Activated B cell treated with CpG ODN at 0.5 μM for 24 hours (primary cell): ENCODE measurements at regions of chr1 and their contacts with region 1.

Region 1: GRCh38 chr1:26472901-26473845 is 933 bp downstream of the HMGN2 start:
- DNase-seq: peak; percentile 95
- ATAC-seq: peak; percentile 78
- H3K4me3 Mint-ChIP-seq: peak overlapping the region; percentile 88
- H3K27ac Mint-ChIP-seq: peak overlapping the region; percentile 84
- H3K4me1 Mint-ChIP-seq: peaks cover 58% of the 10 kb centered on the region
- H3K27me3 Mint-ChIP-seq: no peaks in the 10 kb centered on the region
- CTCF ChIP-seq: no peak

Region 2: GRCh38 chr1:25933479-25934365 is 539.5 kb before region 1 on chr1:
- CTCF ChIA-PET with region 1: no interaction called
- POLR2A ChIA-PET with region 1: no interaction called
- intact Hi-C with region 1: no loop called
- DNase-seq: no peak
- ATAC-seq: no peak
- H3K4me3 Mint-ChIP-seq: no peak overlapping the region
- H3K27ac Mint-ChIP-seq: no peak overlapping the region
- H3K4me1 Mint-ChIP-seq: no peaks in the 10 kb centered on the region
- H3K27me3 Mint-ChIP-seq: peaks cover 15% of the 10 kb centered on the region
- CTCF ChIP-seq: no peak

Region 3: GRCh38 chr1:26111530-26112406 is 361.4 kb before region 1 on chr1 and contains the start of gene PDIK1L:
- CTCF ChIA-PET with region 1: no interaction called
- POLR2A ChIA-PET with region 1: no interaction called
- intact Hi-C with region 1: loop called (anchors 1 kb)
- DNase-seq: peak; percentile 90
- ATAC-seq: peak; percentile 80
- H3K4me3 Mint-ChIP-seq: peak within 1 kb of the TSS; percentile 94
- H3K27ac Mint-ChIP-seq: peak within 1 kb of the TSS; percentile 89
- H3K4me1 Mint-ChIP-seq: peaks cover 20% of the 10 kb centered on the region
- H3K27me3 Mint-ChIP-seq: no peaks in the 10 kb centered on the region
- CTCF ChIP-seq: no peak
- total RNA-seq, gene PDIK1L: 9.4 and 10.5 TPM in 2 replicates

Region 4: GRCh38 chr1:26417111-26417759 is 55.9 kb before region 1 on chr1:
- CTCF ChIA-PET with region 1: no interaction called
- POLR2A ChIA-PET with region 1: interaction called, 10 read pairs
- intact Hi-C with region 1: no loop called
- DNase-seq: peak; percentile 67
- ATAC-seq: peak; percentile 99
- H3K4me3 Mint-ChIP-seq: no peak overlapping the region
- H3K27ac Mint-ChIP-seq: no peak overlapping the region
- H3K4me1 Mint-ChIP-seq: no peaks in the 10 kb centered on the region
- H3K27me3 Mint-ChIP-seq: peaks cover 29% of the 10 kb centered on the region
- CTCF ChIP-seq: peak; percentile 35

Region 5: DNA sequence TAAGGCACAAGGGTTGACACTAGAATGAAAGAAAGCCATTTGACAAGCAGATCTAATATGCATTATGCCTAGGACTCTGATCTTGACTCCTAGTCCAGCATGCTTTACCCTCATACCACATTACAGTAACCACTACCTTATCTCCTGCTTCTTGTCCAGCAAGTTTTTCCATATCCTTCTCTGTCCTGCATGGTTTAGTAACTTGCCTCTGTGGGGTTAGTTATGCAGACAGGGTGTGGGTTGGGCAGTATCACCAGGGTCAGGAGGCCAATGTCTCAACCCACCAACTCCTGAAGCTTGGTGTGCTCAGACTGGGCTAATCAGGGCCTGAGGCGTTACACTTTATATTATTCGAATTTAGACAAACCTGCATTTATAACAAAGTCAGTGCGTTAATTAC is 22.3 kb before region 1 on chr1:
- CTCF ChIA-PET with region 1: no interaction called
- POLR2A ChIA-PET with region 1: no interaction called
- intact Hi-C with region 1: no loop called
- DNase-seq: no peak
- ATAC-seq: no peak
- H3K4me3 Mint-ChIP-seq: no peak overlapping the region
- H3K27ac Mint-ChIP-seq: no peak overlapping the region
- H3K4me1 Mint-ChIP-seq: peaks cover 19% of the 10 kb centered on the region
- H3K27me3 Mint-ChIP-seq: no peaks in the 10 kb centered on the region
- CTCF ChIP-seq: no peak

Region 6: GRCh38 chr1:26529655-26530409 is 56.7 kb after region 1 on chr1 and contains the start of gene RPS6KA1:
- CTCF ChIA-PET with region 1: no interaction called
- POLR2A ChIA-PET with region 1: no interaction called
- intact Hi-C with region 1: no loop called
- DNase-seq: peak; percentile 72
- ATAC-seq: peak; percentile 95
- H3K4me3 Mint-ChIP-seq: peak within 1 kb of the TSS; percentile 90
- H3K27ac Mint-ChIP-seq: peak within 1 kb of the TSS; percentile 80
- H3K4me1 Mint-ChIP-seq: peaks cover 32% of the 10 kb centered on the region
- H3K27me3 Mint-ChIP-seq: peaks cover 1% of the 10 kb centered on the region
- CTCF ChIP-seq: no peak
- total RNA-seq, gene RPS6KA1: 139 and 150 TPM in 2 replicates

Region 7: DNA sequence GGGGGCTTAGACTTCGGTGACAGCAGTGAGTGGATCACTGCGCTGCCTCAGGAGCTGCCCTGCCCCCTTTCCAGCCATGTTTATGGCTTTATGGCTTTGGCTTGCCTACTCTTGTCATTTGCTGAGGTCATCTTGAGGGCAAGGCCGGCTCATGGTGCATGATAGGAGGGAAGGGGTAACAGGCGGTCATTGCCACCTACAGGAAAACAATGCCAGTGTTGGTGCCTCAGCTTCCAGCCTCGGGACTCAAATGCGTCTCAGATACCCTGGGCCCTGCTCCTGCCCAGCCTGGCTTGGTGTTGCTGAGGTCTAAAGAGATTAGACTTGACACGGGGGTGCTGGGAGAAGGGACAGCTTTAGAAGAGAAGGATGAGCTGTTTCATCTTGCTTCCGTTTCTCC is 472.6 kb after region 1 on chr1:
- CTCF ChIA-PET with region 1: no interaction called
- POLR2A ChIA-PET with region 1: no interaction called
- intact Hi-C with region 1: no loop called
- DNase-seq: no peak
- ATAC-seq: no peak
- H3K4me3 Mint-ChIP-seq: no peak overlapping the region
- H3K27ac Mint-ChIP-seq: no peak overlapping the region
- H3K4me1 Mint-ChIP-seq: no peaks in the 10 kb centered on the region
- H3K27me3 Mint-ChIP-seq: no peaks in the 10 kb centered on the region
- CTCF ChIP-seq: no peak